ENCODE measurements at regions of chr16 and their contacts with region 1.

Region 1: DNA sequence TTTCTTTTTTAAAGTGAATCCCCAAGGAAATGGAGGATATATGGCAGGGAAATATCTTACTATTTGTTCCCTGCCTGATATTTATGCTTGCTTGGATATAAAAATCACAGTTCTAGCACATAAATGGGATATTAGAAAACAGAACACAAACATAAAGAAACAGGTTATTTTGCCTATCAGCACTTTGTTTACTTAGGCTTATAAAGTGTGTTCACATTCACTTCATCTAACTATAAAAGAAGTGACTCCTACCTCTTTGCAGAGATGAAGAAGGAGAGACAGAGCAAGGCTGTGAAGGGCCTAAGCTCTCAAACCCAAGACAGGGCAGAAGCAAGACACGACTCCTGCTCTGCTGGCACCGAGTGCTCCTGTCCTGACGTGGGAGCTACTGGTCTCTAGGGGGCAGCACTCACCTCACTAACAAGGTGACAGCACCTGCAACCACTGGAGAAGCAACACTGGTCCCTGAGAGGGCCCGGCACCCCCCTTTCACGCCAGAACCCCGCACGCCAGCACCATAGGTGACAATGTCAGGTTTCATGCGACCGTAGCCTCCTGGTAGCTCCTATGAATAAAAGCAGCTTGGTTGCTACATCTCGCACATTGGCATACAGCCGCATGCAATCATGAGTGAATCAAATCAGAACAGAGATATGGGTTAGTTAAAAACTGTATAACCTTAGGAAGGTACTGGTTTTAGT is 32.0 kb downstream of the MBTPS1 start:
- DNase-seq: peak; percentile 66 to 72 (median 69)
- H3K4me3 ChIP-seq: no peak overlapping the region
- H3K27ac ChIP-seq: no peak overlapping the region
- H3K4me1 ChIP-seq: peaks cover 20 to 49% (median 43%) of the 10 kb centered on the region in 4 experiments
- H3K27me3 ChIP-seq: peaks cover 0 to 19% (median 4%) of the 10 kb centered on the region in 5 experiments

Region 2: GRCh38 chr16:83959656-83960434 is 124.9 kb before region 1 on chr16:
- CTCF ChIA-PET with region 1: no interaction called
- POLR2A ChIA-PET with region 1: no interaction called
- DNase-seq: no peak
- H3K4me3 ChIP-seq: no peak overlapping the region
- H3K27ac ChIP-seq: no peak overlapping the region
- H3K4me1 ChIP-seq: no peaks in the 10 kb centered on the region
- H3K27me3 ChIP-seq: peaks cover 0 to 16% (median 5%) of the 10 kb centered on the region in 5 experiments

Region 3: GRCh38 chr16:84044118-84044488 is 40.6 kb before region 1 on chr16:
- CTCF ChIA-PET with region 1: no interaction called
- POLR2A ChIA-PET with region 1: no interaction called
- DNase-seq: peak in 2 of 3 donors; percentile 23 to 36
- H3K4me3 ChIP-seq: no peak overlapping the region
- H3K27ac ChIP-seq: no peak overlapping the region
- H3K4me1 ChIP-seq: no peaks in the 10 kb centered on the region
- H3K27me3 ChIP-seq: peaks cover 0 to 79% (median 28%) of the 10 kb centered on the region in 5 experiments

Region 4: GRCh38 chr16:84105301-84105815 is 20.6 kb after region 1 on chr16:
- CTCF ChIA-PET with region 1: interaction called, 12 read pairs
- POLR2A ChIA-PET with region 1: no interaction called
- DNase-seq: no peak
- H3K4me3 ChIP-seq: no peak overlapping the region
- H3K27ac ChIP-seq: no peak overlapping the region
- H3K4me1 ChIP-seq: peaks cover 0 to 7% (median 0%) of the 10 kb centered on the region in 4 experiments
- H3K27me3 ChIP-seq: no peaks in the 10 kb centered on the region